ENCODE measurements at regions of chrX and their contacts with region 1.

Region 1: GRCh38 chrX:105098827-105099226 is 121.7 kb downstream of the TEX13A start:
- DNase-seq: no peak
- ATAC-seq: no peak

Region 2: GRCh38 chrX:104877504-104877903 is 221.3 kb before region 1 on chrX:
- intact Hi-C with region 1: no loop called
- DNase-seq: no peak
- ATAC-seq: no peak

Region 3: GRCh38 chrX:105179634-105180033 is 80.8 kb after region 1 on chrX:
- intact Hi-C with region 1: loop called (anchors 2 kb)
- DNase-seq: no peak
- ATAC-seq: no peak

Measured in sciatic nerve (tissue), 2 donors.